ENCODE measurements at regions of chr18 and their contacts with region 1.

Region 1: DNA sequence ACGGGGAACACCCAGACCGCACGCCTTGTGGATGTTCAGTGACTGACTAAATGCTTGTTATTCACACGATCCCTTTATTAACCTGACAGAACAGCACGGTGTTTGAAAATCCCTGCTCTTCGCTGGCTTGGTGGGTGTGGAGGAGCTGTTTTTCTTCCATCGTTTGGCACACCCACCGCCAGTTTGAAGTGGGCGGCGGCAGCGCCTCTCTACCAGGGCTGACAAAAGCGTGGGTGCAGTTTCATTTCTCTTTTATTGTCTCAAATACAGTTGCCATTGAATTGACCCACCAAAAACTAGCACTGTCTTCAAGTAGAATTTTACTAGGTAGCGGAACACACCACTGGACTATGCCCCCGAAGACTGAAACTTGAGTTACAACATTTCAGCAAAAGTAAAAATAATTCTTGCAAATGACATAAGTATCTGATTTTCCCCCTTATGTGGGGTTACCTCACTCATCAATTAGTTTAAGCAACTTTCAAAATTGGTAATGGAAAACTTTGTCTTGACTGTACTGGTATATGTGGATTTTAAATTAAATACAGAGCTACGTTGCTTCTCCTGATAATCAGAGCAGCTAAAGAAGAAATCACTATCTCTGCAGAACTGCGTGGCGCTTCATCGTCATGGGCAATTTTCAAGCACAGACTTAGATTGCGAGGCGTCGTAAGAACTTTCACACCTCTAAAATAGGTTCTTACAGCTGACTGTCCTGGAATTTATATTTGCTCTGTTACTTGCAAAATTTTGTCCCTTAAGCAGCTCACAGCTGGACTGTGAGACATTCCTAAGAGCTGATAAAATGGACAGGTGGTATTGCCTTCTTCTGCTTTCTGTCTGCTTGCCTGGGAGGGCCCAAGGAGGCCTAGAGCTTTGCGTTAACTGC is 60.9 kb downstream of the LDLRAD4 start:
- DNase-seq: peak in 8 of 9 donors; percentile 26 to 52 (median 40)
- ATAC-seq: peak; percentile 61
- H3K4me3 ChIP-seq: peak overlapping the region; percentile 27
- H3K4me3 Mint-ChIP-seq: peak overlapping the region; percentile 72 to 91 (median 85)
- H3K27ac ChIP-seq: peak overlapping the region; percentile 66
- H3K27ac Mint-ChIP-seq: peak overlapping the region; percentile 63 to 94 (median 89)
- H3K4me1 ChIP-seq: peaks cover 2 to 19% of the 10 kb centered on the region in 2 donors
- H3K4me1 Mint-ChIP-seq: peaks cover 9 to 84% (median 71%) of the 10 kb centered on the region in 7 donors
- H3K27me3 ChIP-seq: no peaks in the 10 kb centered on the region
- H3K27me3 Mint-ChIP-seq: no peaks in the 10 kb centered on the region

Region 2: DNA sequence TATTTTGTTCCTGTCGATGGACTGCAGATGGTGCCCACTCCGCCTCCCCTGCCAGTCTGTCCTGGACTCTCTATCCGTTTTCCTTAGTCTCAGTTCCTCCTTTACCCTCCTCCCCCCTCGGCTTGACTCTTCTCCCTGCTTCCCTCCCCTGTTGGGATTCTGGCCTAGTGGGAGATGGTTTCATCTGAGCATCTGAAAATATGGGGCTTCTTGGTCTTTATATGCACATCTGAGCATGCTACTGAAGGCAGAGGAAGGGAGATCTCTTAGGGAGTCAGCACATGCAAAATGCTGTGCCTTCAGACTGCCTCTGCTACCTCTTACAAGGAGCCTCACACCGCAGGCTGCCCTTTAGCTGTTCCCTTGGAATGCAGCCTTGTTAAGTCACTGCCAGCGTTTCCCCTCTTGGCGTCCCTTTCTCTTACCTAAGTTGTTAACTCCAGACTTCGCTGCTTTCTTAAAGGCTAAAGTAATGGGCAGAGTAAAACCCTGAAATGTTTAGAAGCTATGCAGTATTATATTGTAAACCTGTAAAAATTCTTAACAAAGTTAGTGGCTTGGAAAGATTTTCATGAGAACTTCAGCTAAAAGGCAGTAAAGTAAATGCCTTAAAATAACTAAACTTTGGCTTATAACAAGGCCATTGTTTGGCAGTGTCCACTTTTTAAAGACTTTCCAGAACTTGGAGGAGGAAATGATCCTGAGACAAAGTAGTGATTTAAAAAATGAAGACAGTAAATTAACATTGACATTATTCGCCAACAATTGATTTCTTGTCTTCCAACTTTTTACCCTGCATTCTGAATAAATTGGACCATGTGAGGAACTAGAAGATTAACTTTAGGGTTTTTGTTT is 11.0 kb before region 1 on chr18:
- CTCF ChIA-PET with region 1: interaction called, 3 read pairs
- POLR2A ChIA-PET with region 1: interaction called, 7 read pairs
- intact Hi-C with region 1: loop called in 1 of 2 experiments (anchors 1 kb)
- DNase-seq: no peak
- ATAC-seq: no peak
- H3K4me3 ChIP-seq: no peak overlapping the region
- H3K4me3 Mint-ChIP-seq: peak overlapping the region in 8 of 10 donors; percentile 3 to 68 (median 26)
- H3K27ac ChIP-seq: no peak overlapping the region
- H3K27ac Mint-ChIP-seq: peak overlapping the region in 8 of 9 donors; percentile 65 to 89 (median 83)
- H3K4me1 ChIP-seq: peaks cover 0 to 49% of the 10 kb centered on the region in 2 donors
- H3K4me1 Mint-ChIP-seq: peaks cover 24 to 84% (median 65%) of the 10 kb centered on the region in 7 donors
- H3K27me3 ChIP-seq: no peaks in the 10 kb centered on the region
- H3K27me3 Mint-ChIP-seq: peaks cover 0 to 4% (median 0%) of the 10 kb centered on the region in 5 donors

Region 3: GRCh38 chr18:13289481-13290205 is 10.2 kb after region 1 on chr18:
- CTCF ChIA-PET with region 1: no interaction called
- POLR2A ChIA-PET with region 1: no interaction called
- intact Hi-C with region 1: no loop called
- DNase-seq: no peak
- ATAC-seq: no peak
- H3K4me3 ChIP-seq: no peak overlapping the region
- H3K4me3 Mint-ChIP-seq: no peak overlapping the region
- H3K27ac ChIP-seq: no peak overlapping the region
- H3K27ac Mint-ChIP-seq: peak overlapping the region in 5 of 9 donors; percentile 0 to 72 (median 51)
- H3K4me1 ChIP-seq: peaks cover 0 to 7% of the 10 kb centered on the region in 2 donors
- H3K4me1 Mint-ChIP-seq: peaks cover 3 to 48% (median 11%) of the 10 kb centered on the region in 7 donors
- H3K27me3 ChIP-seq: no peaks in the 10 kb centered on the region
- H3K27me3 Mint-ChIP-seq: no peaks in the 10 kb centered on the region

Region 4: GRCh38 chr18:13313006-13313686 is 33.7 kb after region 1 on chr18:
- CTCF ChIA-PET with region 1: no interaction called
- POLR2A ChIA-PET with region 1: no interaction called
- intact Hi-C with region 1: loop called in 1 of 2 experiments (anchors 2 kb)
- DNase-seq: peak in 7 of 9 donors; percentile 41 to 74 (median 67)
- ATAC-seq: peak; percentile 79
- H3K4me3 ChIP-seq: no peak overlapping the region
- H3K4me3 Mint-ChIP-seq: peak overlapping the region; percentile 51 to 81 (median 68)
- H3K27ac ChIP-seq: peak overlapping the region; percentile 48
- H3K27ac Mint-ChIP-seq: peak overlapping the region; percentile 70 to 97 (median 89)
- H3K4me1 ChIP-seq: peaks cover 0 to 17% of the 10 kb centered on the region in 2 donors
- H3K4me1 Mint-ChIP-seq: peaks cover 21 to 55% (median 42%) of the 10 kb centered on the region in 7 donors
- H3K27me3 ChIP-seq: no peaks in the 10 kb centered on the region
- H3K27me3 Mint-ChIP-seq: no peaks in the 10 kb centered on the region

Region 5: GRCh38 chr18:13539050-13539449 is 259.6 kb after region 1 on chr18:
- CTCF ChIA-PET with region 1: no interaction called
- POLR2A ChIA-PET with region 1: no interaction called
- intact Hi-C with region 1: loop called in 1 of 2 experiments (anchors 5 kb)
- DNase-seq: peak in 7 of 9 donors; percentile 68 to 86 (median 79)
- ATAC-seq: peak; percentile 92
- H3K4me3 ChIP-seq: no peak overlapping the region
- H3K4me3 Mint-ChIP-seq: peak overlapping the region; percentile 70 to 85 (median 74)
- H3K27ac ChIP-seq: peak overlapping the region; percentile 66
- H3K27ac Mint-ChIP-seq: peak overlapping the region; percentile 64 to 97 (median 90)
- H3K4me1 ChIP-seq: peaks cover 11 to 36% of the 10 kb centered on the region in 2 donors
- H3K4me1 Mint-ChIP-seq: peaks cover 28 to 80% (median 70%) of the 10 kb centered on the region in 7 donors
- H3K27me3 ChIP-seq: no peaks in the 10 kb centered on the region
- H3K27me3 Mint-ChIP-seq: no peaks in the 10 kb centered on the region

Measured in naive thymus-derived CD4-positive, alpha-beta T cell (primary cell).